Dendritic cell treated with granulocyte-macrophage colony-stimulating factor and Interleukin-4, amounts not matched to agents 40 ng/mL and 50 ng/mL, for 4 days (primary cell): ENCODE measurements at regions of chr5 and their contacts with region 1.

Region 1: GRCh38 chr5:343461-344401 is 22.2 kb downstream of the AHRR start:
- H3K4me3 Mint-ChIP-seq: peak overlapping the region; percentile 82
- H3K27ac Mint-ChIP-seq: peak overlapping the region; percentile 79
- H3K4me1 Mint-ChIP-seq: peaks cover 71% of the 10 kb centered on the region
- H3K27me3 Mint-ChIP-seq: peaks cover 3% of the 10 kb centered on the region

Region 2: DNA sequence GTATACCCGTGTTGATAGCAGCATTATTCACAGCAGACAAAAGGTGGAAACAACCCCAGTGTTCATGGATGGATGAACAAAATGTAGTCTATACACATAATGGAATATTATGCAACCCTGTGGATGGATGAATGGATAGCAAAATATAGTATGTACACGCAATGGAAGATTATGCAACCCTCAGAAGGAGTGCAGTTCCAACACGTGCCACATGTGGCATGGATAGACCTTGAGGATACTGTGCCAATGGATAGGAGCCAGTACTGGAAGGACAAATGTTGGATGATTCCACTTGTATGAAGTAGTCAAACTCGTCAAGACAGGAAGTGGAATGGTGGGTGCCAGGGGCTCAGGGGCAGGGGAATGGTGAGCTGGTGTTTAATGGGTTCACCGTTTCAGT is 206.8 kb before region 1 on chr5:
- intact Hi-C with region 1: no loop called
- H3K4me3 Mint-ChIP-seq: no peak overlapping the region
- H3K27ac Mint-ChIP-seq: no peak overlapping the region
- H3K4me1 Mint-ChIP-seq: no peaks in the 10 kb centered on the region
- H3K27me3 Mint-ChIP-seq: no peaks in the 10 kb centered on the region

Region 3: DNA sequence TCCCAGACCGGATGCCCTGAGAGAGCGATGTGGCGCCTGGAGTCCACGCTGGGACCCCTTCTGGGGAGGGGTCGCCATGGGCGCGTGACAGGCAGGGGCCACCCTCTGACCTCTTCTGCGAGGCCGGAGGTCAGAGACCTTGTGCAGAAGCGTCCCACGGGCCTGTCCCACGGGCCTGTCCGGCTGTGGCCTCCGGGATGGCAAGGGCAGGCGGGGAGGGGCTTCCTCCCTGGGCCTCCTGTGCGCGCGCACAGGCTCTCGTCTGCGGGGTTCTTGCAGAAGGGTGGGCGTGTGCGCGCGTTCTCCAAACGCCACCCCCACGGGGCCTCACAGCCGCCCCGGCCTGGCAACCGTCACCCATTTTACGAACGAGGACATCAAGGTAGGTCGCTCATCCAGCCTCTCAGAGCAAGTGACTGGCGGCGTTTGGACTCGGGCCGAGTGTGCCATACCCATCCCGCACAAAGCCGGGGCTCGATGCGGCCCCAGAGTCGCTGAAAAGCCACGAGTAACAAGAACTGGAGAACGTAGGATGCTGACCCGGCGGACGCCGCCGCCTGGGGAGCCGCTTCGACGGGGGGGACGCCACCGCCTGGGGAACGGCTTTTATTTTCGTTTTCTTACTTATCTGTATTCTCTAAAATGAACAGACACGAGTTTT is 21.3 kb before region 1 on chr5:
- intact Hi-C with region 1: loop called (anchors 2 kb)
- H3K4me3 Mint-ChIP-seq: peak overlapping the region; percentile 79
- H3K27ac Mint-ChIP-seq: peak overlapping the region; percentile 26
- H3K4me1 Mint-ChIP-seq: peaks cover 71% of the 10 kb centered on the region
- H3K27me3 Mint-ChIP-seq: peaks cover 32% of the 10 kb centered on the region